Activated B cell treated with CpG ODN at 0.5 μM for 24 hours (primary cell): ENCODE measurements at regions of chr5 and their contacts with region 1.

Region 1: DNA sequence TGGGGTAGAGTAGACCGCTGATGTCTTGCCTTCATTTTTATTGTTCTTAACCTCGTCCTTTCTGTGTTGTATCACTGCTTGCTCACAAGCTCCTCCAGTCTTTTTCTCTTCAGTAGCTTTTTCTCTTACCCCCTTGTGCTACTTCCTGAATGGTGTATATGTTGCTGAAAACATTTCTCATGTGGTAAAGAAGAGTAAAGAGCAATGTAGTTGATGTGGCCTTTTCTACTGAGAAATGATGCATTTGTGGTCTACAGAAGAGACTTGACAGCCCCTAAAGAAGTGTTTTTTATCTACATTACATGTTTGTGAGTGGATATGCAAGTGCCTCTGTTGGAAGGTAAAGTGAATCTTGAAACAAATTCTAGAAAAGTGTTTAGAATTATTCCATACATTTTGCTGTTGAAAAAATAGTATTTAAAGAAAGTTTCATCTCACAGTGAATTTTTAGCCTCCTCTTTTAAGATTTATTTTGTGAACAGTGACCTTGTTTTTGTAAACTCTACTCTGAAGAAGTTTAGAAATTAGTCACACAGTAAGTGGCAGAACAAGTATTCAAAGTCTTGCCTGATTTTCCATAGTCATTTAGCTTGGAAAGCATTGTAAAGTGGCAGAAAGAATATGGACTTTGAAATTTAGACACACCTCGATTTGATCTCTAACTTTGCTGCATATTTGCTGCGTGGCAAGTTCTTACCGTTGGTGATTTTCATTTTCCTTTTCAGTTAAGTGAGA is 17.4 kb downstream of the CDC42SE2 start:
- DNase-seq: no peak
- ATAC-seq: no peak
- H3K4me3 Mint-ChIP-seq: peak overlapping the region; percentile 30
- H3K27ac Mint-ChIP-seq: peak overlapping the region; percentile 43
- H3K4me1 Mint-ChIP-seq: peaks cover 91% of the 10 kb centered on the region
- H3K27me3 Mint-ChIP-seq: no peaks in the 10 kb centered on the region
- CTCF ChIP-seq: no peak

Region 2: GRCh38 chr5:130365956-130366355 is 915.3 kb before region 1 on chr5:
- CTCF ChIA-PET with region 1: no interaction called
- POLR2A ChIA-PET with region 1: no interaction called
- intact Hi-C with region 1: no loop called
- DNase-seq: no peak
- ATAC-seq: no peak
- H3K4me3 Mint-ChIP-seq: no peak overlapping the region
- H3K27ac Mint-ChIP-seq: no peak overlapping the region
- H3K4me1 Mint-ChIP-seq: no peaks in the 10 kb centered on the region
- H3K27me3 Mint-ChIP-seq: no peaks in the 10 kb centered on the region
- CTCF ChIP-seq: no peak

Region 3: GRCh38 chr5:131328536-131329285 is 47.4 kb after region 1 on chr5:
- CTCF ChIA-PET with region 1: no interaction called
- POLR2A ChIA-PET with region 1: no interaction called
- intact Hi-C with region 1: loop called (anchors 10 kb)
- DNase-seq: no peak
- ATAC-seq: no peak
- H3K4me3 Mint-ChIP-seq: no peak overlapping the region
- H3K27ac Mint-ChIP-seq: no peak overlapping the region
- H3K4me1 Mint-ChIP-seq: peaks cover 63% of the 10 kb centered on the region
- H3K27me3 Mint-ChIP-seq: no peaks in the 10 kb centered on the region
- CTCF ChIP-seq: no peak

Region 4: DNA sequence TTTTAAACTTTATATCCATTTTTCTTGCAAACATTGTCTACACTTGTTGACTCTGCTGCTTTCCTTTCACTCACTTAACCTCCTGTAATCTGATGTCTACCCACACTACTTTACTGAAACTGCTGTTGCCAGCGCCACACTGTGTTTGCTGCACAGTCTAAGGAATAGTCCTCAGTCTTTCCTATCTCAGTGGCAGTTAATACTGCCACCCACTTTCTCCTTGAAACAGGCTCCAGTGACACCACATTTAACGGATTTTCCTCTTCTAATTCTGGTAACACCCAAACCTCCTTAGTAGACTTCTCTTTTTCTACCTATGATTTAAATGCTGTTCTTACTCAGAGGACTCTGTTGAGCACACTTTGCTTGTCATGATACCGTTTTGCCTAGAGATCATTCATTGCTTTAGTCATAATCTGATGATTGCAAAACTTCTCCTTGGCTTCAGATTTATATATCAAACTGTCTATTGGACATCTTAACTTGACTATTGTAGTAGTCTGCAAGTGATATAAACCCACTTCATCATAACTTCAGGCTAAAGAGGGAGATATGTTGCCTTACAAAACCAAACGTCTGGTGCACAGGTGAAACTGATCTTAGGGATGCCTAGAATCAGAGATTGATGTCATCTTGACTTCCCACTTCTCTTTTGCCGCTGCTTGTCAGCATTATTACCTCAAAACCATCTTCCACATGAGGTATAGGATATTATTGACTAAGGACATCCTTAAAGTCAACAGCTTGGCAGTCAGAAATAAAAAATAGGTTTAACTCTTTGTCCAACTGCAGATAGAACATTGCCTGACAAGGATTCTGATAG is 76.7 kb after region 1 on chr5:
- CTCF ChIA-PET with region 1: no interaction called
- POLR2A ChIA-PET with region 1: no interaction called
- intact Hi-C with region 1: loop called (anchors 2 kb)
- DNase-seq: no peak
- ATAC-seq: peak; percentile 67
- H3K4me3 Mint-ChIP-seq: peak overlapping the region; percentile 47
- H3K27ac Mint-ChIP-seq: peak overlapping the region; percentile 84
- H3K4me1 Mint-ChIP-seq: peaks cover 47% of the 10 kb centered on the region
- H3K27me3 Mint-ChIP-seq: no peaks in the 10 kb centered on the region
- CTCF ChIP-seq: no peak

Region 5: GRCh38 chr5:131481569-131481968 is 200.3 kb after region 1 on chr5:
- CTCF ChIA-PET with region 1: no interaction called
- POLR2A ChIA-PET with region 1: no interaction called
- intact Hi-C with region 1: no loop called
- DNase-seq: no peak
- ATAC-seq: no peak
- H3K4me3 Mint-ChIP-seq: no peak overlapping the region
- H3K27ac Mint-ChIP-seq: no peak overlapping the region
- H3K4me1 Mint-ChIP-seq: peaks cover 2% of the 10 kb centered on the region
- H3K27me3 Mint-ChIP-seq: no peaks in the 10 kb centered on the region
- CTCF ChIP-seq: no peak